ENCODE measurements at regions of chr7 and their contacts with region 1.

Region 1: GRCh38 chr7:36318116-36318515 is 71.5 kb upstream of the ANLN start:
- DNase-seq: no peak
- H3K4me3 ChIP-seq: no peak overlapping the region
- H3K27ac ChIP-seq: no peak overlapping the region
- H3K4me1 ChIP-seq: peaks cover 0 to 3% (median 0%) of the 10 kb centered on the region in 4 experiments; a peak in 3 of 7 replicates
- H3K27me3 ChIP-seq: no peaks in the 10 kb centered on the region
- CTCF ChIP-seq: no peak
- EP300 ChIP-seq: no peak
- POLR2A ChIP-seq: no peak
- RAD21 ChIP-seq: no peak

Region 2: GRCh38 chr7:36280840-36281812 is 37.0 kb before region 1 on chr7:
- CTCF ChIA-PET with region 1: interaction called, 11 read pairs
- POLR2A ChIA-PET with region 1: no interaction called
- DNase-seq: no peak
- H3K4me3 ChIP-seq: peak overlapping the region in 1 of 4 experiments; percentile 29; a peak in 2 of 8 replicates
- H3K27ac ChIP-seq: peak overlapping the region; percentile 77; the same call in 1 of the 2 replicates
- H3K4me1 ChIP-seq: peaks cover 27 to 63% (median 44%) of the 10 kb centered on the region in 4 experiments
- H3K27me3 ChIP-seq: no peaks in the 10 kb centered on the region
- CTCF ChIP-seq: no peak
- EP300 ChIP-seq: no peak
- POLR2A ChIP-seq: 0 out of 3 replicates have a peak, but pooled peaks of 1 of the 2 experiments have one; percentile 41
- RAD21 ChIP-seq: no peak

Region 3: GRCh38 chr7:36303202-36304098 is 14.7 kb before region 1 on chr7:
- CTCF ChIA-PET with region 1: interaction called, 40 read pairs
- POLR2A ChIA-PET with region 1: interaction called, 3 read pairs
- DNase-seq: no peak
- H3K4me3 ChIP-seq: no peak overlapping the region
- H3K27ac ChIP-seq: no peak overlapping the region
- H3K4me1 ChIP-seq: peaks cover 0 to 6% (median 0%) of the 10 kb centered on the region in 4 experiments; a peak in 2 of 7 replicates
- H3K27me3 ChIP-seq: no peaks in the 10 kb centered on the region
- CTCF ChIP-seq: no peak
- EP300 ChIP-seq: no peak
- POLR2A ChIP-seq: no peak
- RAD21 ChIP-seq: no peak

Region 4: GRCh38 chr7:36336390-36336789 is 18.3 kb after region 1 on chr7:
- CTCF ChIA-PET with region 1: interaction called, 19 read pairs
- POLR2A ChIA-PET with region 1: no interaction called
- DNase-seq: no peak
- H3K4me3 ChIP-seq: no peak overlapping the region
- H3K27ac ChIP-seq: no peak overlapping the region
- H3K4me1 ChIP-seq: no peaks in the 10 kb centered on the region
- H3K27me3 ChIP-seq: no peaks in the 10 kb centered on the region
- CTCF ChIP-seq: no peak
- EP300 ChIP-seq: no peak
- POLR2A ChIP-seq: no peak
- RAD21 ChIP-seq: no peak

Measured in H1 (cell line).